Astrocyte of the cerebellum (primary cell): ENCODE measurements at regions of chr11 and their contacts with region 1.

Region 1: GRCh38 chr11:110366291-110366690 is 63.5 kb upstream of the FDX1 start:
- DNase-seq: no peak
- H3K4me3 ChIP-seq: no peak overlapping the region
- CTCF ChIP-seq: no peak

Region 2: DNA sequence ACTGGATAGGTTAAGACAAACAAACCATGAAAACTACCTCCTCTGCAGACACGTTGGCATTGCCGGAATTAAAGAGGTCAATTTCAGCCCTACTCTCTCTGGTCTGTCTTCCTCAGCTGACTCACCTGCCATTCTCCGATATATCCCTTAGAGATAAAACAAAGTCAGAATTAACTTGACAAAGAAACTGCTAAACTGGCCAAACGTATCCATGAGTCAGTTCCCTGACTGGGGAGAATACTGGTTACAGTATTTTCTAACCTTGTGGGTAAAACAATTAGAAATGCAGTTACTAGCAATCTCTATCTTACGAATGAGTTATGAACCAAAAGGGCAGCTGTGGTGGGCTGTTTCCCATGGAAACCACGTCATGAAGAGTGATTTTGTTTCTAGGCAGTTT is 166.1 kb before region 1 on chr11:
- in situ Hi-C with region 1: loop called (anchors 5 kb)
- DNase-seq: no peak
- H3K4me3 ChIP-seq: no peak overlapping the region
- CTCF ChIP-seq: no peak

Region 3: DNA sequence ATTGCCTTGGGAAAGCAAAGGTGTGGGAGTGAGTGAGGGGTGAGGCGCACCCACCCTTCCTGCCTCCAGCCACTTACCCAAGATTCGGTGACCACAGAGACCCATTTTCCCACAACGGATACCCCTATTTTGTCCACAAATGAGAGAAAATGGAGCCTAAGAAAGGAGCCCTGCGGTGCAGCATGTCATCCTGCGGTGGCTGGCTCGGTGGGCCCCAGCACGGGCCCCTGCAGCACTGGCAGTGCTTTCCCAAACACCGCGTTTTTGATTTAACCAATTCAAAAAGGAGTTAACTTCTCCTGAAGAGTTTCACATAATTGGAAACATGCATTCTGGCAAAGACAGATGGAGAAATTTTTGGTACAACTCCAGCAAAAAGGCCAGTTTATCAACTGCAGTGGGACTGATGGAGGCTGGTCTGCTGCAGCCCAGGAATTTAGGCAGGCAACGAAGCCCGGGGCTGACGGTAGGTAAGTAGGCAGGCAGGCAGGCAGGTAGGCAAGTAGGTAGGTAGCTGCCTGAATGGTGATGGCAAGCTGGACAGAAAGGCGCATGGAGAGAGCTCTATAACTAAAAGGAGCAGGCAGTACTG is 147.7 kb after region 1 on chr11:
- in situ Hi-C with region 1: no loop called
- DNase-seq: no peak
- H3K4me3 ChIP-seq: no peak overlapping the region
- CTCF ChIP-seq: no peak